ENCODE measurements at regions of chr1 and their contacts with region 1.

Region 1: DNA sequence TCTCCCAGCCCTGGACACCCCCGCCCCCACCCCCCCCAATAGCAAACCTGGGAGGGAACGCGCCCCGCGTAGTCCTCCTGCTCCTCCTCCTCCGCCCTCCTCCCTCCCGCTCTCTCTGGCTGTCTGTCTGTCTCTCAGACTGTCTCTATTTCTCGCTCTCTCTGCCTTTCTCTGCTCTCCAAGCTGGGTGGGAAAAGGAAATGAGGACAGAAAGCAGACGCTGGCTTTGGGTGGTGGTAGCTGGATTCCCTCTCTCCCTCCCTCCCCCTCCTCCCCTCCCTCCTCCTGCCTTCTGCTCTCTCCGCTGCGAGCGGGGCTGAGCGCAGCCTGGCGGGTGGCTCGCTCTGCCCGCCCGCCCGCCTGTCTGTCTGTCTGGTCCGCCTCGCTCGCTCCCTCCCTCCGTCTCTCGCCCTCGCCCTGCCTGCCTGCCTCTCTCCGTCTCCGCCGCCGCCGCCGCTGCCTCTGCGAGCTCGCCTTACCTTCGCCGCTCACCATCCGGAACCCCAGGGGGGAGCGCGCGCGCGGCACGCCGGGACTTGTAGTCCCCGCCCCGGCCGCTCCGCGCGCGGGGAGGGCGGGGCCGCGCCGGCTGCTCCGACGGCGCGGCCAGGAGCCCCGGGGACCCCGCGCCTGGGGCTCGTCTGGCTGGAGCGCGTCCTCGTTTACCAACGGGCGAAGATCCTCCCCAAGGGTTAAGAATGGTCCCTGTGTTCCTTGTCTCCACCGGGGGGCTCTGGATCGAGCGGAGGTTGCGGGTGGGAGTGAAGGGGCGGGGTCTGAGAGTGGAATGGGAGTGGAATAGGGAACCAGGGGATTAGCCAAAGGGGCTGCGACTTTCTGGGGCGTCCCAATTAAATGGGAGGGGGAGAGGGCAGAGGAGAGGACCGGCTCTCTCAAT is at the start of gene AHDC1:
- DNase-seq: peak; percentile 90 to 95 (median 94)
- H3K4me3 ChIP-seq: peak within 1 kb of the TSS; percentile 49 to 95 (median 76)
- H3K27ac ChIP-seq: peak within 1 kb of the TSS; percentile 84 to 96 (median 90)
- H3K4me1 ChIP-seq: peaks cover 31 to 38% of the 10 kb centered on the region in 2 donors
- H3K27me3 ChIP-seq: no peaks in the 10 kb centered on the region
- CTCF ChIP-seq: peak in 3 of 6 experiments; percentile 1 to 47 (median 29)
- POLR2A ChIP-seq: peak; percentile 85 to 95
- total RNA-seq, gene AHDC1: 15.3 to 111 (median 71.0) TPM

Region 2: GRCh38 chr1:27392096-27392777 is 211.7 kb before region 1 on chr1 and contains the start of gene GPR3:
- intact Hi-C with region 1: loop called in 1 of 2 experiments (anchors 5 kb)
- DNase-seq: peak; percentile 87 to 96 (median 93)
- H3K4me3 ChIP-seq: peak within 1 kb of the TSS in 1 of 4 donors; percentile 60
- H3K27ac ChIP-seq: peak within 1 kb of the TSS in 3 of 5 donors; percentile 14 to 76 (median 57)
- H3K4me1 ChIP-seq: peaks cover 11 to 16% of the 10 kb centered on the region in 2 donors
- H3K27me3 ChIP-seq: no peaks in the 10 kb centered on the region
- CTCF ChIP-seq: peak in 4 of 6 experiments; percentile 24 to 39 (median 36)
- POLR2A ChIP-seq: peak in 1 of 2 donors; percentile 31
- total RNA-seq, gene GPR3: 0.17 to 2.0 (median 0.66) TPM in 4 of 9 donors, not detected in the others

Region 3: DNA sequence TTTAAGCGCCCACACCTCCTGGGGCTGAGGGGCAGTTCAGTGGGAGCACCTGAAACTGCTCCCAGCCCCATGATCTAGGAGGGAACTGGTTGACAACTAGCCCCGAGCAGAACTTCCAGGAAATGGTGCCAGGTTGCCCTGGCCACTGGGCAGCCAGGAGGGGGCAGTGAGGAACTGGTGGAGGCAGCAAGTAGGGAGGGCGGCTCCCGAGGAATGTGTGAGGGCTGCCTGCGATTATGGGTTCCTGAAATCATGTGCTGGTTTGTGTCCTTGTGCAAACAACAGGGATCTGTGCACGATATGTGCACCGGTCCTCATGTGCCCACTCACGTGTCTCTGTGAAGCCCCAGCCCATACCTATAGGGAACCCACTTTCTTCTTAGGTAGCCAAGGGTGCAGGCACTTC is 201.6 kb before region 1 on chr1:
- intact Hi-C with region 1: loop called (anchors 2 to 5 kb)
- DNase-seq: peak; percentile 79 to 92 (median 91)
- H3K4me3 ChIP-seq: no peak overlapping the region
- H3K27ac ChIP-seq: peak overlapping the region in 4 of 5 donors; percentile 52 to 88 (median 75)
- H3K4me1 ChIP-seq: peaks cover 27 to 59% of the 10 kb centered on the region in 2 donors
- H3K27me3 ChIP-seq: no peaks in the 10 kb centered on the region
- CTCF ChIP-seq: peak; percentile 38 to 85 (median 70)
- POLR2A ChIP-seq: peak in 1 of 2 donors; percentile 16

Region 4: GRCh38 chr1:27556781-27557595 is 46.9 kb before region 1 on chr1:
- intact Hi-C with region 1: loop called (anchors 2 to 5 kb)
- DNase-seq: peak; percentile 94 to 99 (median 99)
- H3K4me3 ChIP-seq: peak overlapping the region in 1 of 4 donors; percentile 28
- H3K27ac ChIP-seq: peak overlapping the region; percentile 11 to 96 (median 82)
- H3K4me1 ChIP-seq: peaks cover 47 to 61% of the 10 kb centered on the region in 2 donors
- H3K27me3 ChIP-seq: no peaks in the 10 kb centered on the region
- CTCF ChIP-seq: peak; percentile 90 to 95 (median 93)
- POLR2A ChIP-seq: peak in 1 of 2 donors; percentile 65

Region 5: DNA sequence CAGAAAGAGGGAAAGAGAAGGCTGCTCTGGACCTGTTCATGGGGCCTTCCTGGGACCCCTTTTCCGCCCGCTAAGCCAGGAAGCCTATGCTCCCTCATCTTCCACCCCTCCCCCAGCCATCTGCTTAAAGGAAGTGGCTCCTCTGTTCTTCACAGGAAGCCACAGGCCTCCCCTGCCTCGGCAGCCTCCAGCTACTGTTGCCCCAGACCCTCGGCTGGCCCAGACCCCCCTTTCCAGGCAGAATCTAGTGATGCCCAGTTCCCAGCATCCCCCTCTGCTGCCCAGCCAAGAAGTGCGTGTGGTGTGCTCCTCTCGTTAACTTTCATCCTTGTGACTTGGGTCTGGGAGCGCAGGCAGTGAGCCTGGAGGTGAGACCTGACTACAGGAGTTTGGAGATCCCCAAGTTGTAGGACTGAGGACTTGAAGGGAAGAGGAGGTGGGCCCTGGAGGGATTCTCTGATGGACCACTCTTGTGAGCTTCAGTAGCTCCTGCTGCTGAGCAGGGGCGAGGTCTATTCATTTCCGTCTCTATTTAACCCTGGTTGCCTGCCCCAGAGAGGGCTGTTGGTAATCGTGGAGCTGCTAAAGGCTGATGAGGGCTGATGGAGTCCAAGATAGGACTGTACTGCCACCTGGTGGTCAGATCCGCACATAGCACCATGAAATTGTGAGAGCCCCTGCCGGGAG is 58.9 kb after region 1 on chr1:
- intact Hi-C with region 1: loop called (anchors 2 to 5 kb)
- DNase-seq: peak; percentile 69 to 95 (median 85)
- H3K4me3 ChIP-seq: no peak overlapping the region
- H3K27ac ChIP-seq: peak overlapping the region in 1 of 5 donors; percentile 38
- H3K4me1 ChIP-seq: peaks cover 5 to 14% of the 10 kb centered on the region in 2 donors
- H3K27me3 ChIP-seq: no peaks in the 10 kb centered on the region
- CTCF ChIP-seq: peak; percentile 86 to 98 (median 96)
- POLR2A ChIP-seq: no peak